HCT116 (cell line): ENCODE measurements at regions of chr22 and their contacts with region 1.

Region 1: GRCh38 chr22:46774253-46774979 is 12.0 kb downstream of the TBC1D22A start:
- DNase-seq: no peak
- ATAC-seq: peak; percentile 19
- H3K4me3 ChIP-seq: peak overlapping the region; percentile 8 to 51
- H3K27ac ChIP-seq: peak overlapping the region; percentile 99
- H3K4me1 ChIP-seq: peaks cover 39 to 48% of the 10 kb centered on the region in 2 experiments
- H3K27me3 ChIP-seq: no peaks in the 10 kb centered on the region
- CTCF ChIP-seq: no peak
- POLR2A ChIP-seq: no peak
- RAD21 ChIP-seq: no peak

Region 2: DNA sequence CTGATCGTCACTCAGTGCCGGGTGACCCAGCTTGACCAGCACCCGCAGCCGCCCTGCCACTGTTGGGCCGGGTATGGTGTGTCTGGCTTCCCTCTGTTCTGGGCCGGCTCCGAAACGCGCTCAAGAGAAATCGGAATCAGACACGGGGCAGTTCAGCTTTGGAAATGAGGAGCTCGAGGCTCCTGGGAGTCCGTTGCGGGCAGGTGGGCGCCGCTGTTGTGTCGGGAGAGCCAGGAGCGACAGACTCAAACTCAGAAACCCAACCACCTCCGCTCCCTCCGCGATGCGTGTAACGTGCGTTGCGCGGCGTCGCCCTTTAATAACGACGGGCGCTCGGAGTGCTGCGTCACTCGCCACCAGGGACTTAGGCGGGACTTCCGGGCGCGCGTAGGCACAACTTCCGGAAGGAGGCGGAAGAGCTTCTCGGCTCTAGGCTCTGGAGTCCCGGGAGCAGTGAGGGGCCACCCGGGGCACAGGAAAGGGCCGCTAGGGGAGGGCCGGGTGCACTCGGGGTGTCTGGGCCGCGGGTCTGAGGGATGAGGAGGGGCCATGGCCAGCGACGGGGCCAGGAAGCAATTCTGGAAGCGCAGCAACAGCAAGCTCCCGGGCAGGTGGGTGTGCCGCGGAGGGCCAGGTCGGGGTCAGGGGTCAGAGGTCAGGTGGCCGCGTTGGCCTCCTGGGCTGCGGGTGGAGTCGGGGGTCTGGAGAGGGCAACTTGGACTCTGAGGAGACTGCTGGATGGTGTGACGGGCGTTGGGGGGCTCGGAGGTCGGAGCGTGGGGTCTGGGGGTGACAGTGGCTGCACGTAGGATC is 12.0 kb before region 1 on chr22 and contains the start of gene TBC1D22A:
- CTCF ChIA-PET with region 1: interaction called, 10 read pairs
- POLR2A ChIA-PET with region 1: interaction called, 33 read pairs
- RAD21 ChIA-PET with region 1: interaction called in 1 of 2 experiments, 7 read pairs
- intact Hi-C with region 1: no loop called
- DNase-seq: peak; percentile 90
- ATAC-seq: peak; percentile 92
- H3K4me3 ChIP-seq: peak within 1 kb of the TSS; percentile 99 to 100
- H3K27ac ChIP-seq: peak within 1 kb of the TSS; percentile 85
- H3K4me1 ChIP-seq: peaks cover 12 to 32% of the 10 kb centered on the region in 2 experiments
- H3K27me3 ChIP-seq: no peaks in the 10 kb centered on the region
- CTCF ChIP-seq: no peak
- POLR2A ChIP-seq: peak; percentile 97
- RAD21 ChIP-seq: peak; percentile 18; the same call in 1 of the 2 replicates
- total RNA-seq, gene TBC1D22A: 20.9 TPM